ENCODE measurements at regions of chr5 and their contacts with region 1.

Region 1: GRCh38 chr5:75668977-75669689 is 48.1 kb downstream of the POC5 start:
- DNase-seq: peak; percentile 6
- H3K4me3 ChIP-seq: no peak overlapping the region
- H3K27ac ChIP-seq: no peak overlapping the region
- H3K4me1 ChIP-seq: no peaks in the 10 kb centered on the region
- H3K27me3 ChIP-seq: no peaks in the 10 kb centered on the region
- CTCF ChIP-seq: no peak

Region 2: GRCh38 chr5:75526070-75526469 is 143.1 kb before region 1 on chr5:
- CTCF ChIA-PET with region 1: interaction called, 20 read pairs
- dilution Hi-C with region 1: no loop called
- in situ Hi-C with region 1: no loop called
- intact Hi-C with region 1: no loop called
- DNase-seq: no peak
- H3K4me3 ChIP-seq: no peak overlapping the region
- H3K27ac ChIP-seq: no peak overlapping the region
- H3K4me1 ChIP-seq: peaks cover 13% of the 10 kb centered on the region
- H3K27me3 ChIP-seq: no peaks in the 10 kb centered on the region
- CTCF ChIP-seq: no peak

Region 3: GRCh38 chr5:75706016-75706415 is 36.9 kb after region 1 on chr5:
- CTCF ChIA-PET with region 1: no interaction called
- dilution Hi-C with region 1: no loop called
- in situ Hi-C with region 1: no loop called
- intact Hi-C with region 1: no loop called
- DNase-seq: no peak
- H3K4me3 ChIP-seq: no peak overlapping the region
- H3K27ac ChIP-seq: no peak overlapping the region
- H3K4me1 ChIP-seq: no peaks in the 10 kb centered on the region
- H3K27me3 ChIP-seq: no peaks in the 10 kb centered on the region
- CTCF ChIP-seq: no peak

Region 4: DNA sequence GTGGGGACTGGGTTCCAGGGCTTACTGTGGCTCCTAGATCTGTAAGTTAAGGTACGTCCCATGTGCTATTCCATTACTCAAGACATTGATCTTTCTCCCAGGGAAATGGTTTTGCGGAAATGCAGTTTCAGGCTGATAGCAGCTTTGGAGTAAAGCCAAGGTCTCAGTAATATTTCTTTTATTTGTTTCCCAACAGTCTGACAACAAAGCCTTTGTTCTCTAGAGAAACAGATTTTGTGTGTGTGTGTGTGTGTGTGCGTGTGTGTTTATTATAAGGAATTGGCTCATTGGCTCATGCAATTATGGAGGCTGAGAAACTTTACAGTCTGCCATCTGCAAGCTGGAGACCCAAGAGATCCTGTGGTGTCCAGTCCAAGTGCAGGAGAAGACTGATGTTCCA is 60.2 kb after region 1 on chr5:
- CTCF ChIA-PET with region 1: no interaction called
- dilution Hi-C with region 1: no loop called
- in situ Hi-C with region 1: no loop called
- intact Hi-C with region 1: no loop called
- DNase-seq: no peak
- H3K4me3 ChIP-seq: no peak overlapping the region
- H3K27ac ChIP-seq: no peak overlapping the region
- H3K4me1 ChIP-seq: no peaks in the 10 kb centered on the region
- H3K27me3 ChIP-seq: no peaks in the 10 kb centered on the region
- CTCF ChIP-seq: no peak